Kidney (tissue), 22 donors: ENCODE measurements at regions of chr11 and their contacts with region 1.

Region 1: DNA sequence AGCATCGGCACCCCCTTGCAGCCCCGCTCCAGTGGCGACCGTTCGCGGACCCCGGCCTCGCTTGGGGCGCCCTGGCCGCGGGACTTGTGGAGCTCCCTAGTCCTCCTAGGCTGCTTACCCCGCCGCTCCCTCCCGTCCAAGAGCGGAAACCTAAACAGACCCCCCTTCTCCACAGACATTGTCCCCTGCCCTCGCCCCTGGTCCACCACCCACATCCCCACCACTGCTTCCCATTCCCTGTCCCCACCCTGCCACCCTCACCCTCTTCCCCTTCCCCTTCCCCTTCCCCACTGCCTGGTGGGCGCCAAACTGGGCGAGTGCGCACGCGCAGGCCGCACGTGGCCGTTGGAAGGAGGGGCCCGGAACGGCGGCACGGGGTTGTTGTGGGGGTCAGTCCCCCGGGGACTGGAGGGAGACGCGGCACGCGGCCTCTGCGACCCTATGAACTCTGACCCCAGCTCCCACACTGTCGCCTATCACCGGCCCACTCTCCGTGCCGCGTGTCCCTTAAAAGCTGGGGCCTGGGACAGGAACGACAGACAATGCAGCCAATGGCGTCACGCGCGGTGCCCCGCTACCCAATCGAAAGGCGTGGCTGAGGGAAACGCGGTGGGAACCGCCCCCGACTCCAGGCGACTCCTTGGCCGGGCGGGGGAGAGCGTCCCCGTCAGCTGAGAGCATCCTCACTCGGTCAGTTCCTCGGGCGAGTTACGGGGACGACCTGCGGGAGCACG is at the start of gene SNX32:
- DNase-seq: peak; percentile 95 to 98 (median 97)
- H3K4me3 ChIP-seq: peak within 1 kb of the TSS; percentile 69 to 85 (median 76)
- H3K27ac ChIP-seq: peak within 1 kb of the TSS in 1 of 2 donors; percentile 41
- H3K4me1 ChIP-seq: peaks cover 5 to 13% (median 6%) of the 10 kb centered on the region in 3 donors
- H3K27me3 ChIP-seq: no peaks in the 10 kb centered on the region
- CTCF ChIP-seq: no peak
- total RNA-seq, gene SNX32: 1.0 TPM

Region 2: DNA sequence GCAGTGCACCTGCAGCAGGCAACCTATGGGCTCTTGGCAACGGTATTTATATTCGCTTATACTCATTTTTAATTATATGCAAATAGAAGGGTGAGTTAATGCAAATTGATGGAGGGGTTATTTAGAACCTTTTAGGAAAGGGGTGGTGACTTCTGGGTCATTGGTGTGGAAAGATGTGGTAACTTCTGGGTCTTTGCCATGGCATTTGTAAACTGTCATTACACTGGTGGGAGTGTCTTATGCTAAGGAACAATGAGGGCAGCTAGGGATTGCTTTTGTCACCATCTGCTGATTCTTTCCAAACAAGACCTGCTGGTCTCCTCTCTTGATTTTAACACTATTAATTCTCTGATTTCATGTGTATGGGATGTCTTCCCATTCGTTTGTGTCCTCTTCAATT is 133.1 kb before region 1 on chr11:
- intact Hi-C with region 1: loop called (anchors 10 kb)
- DNase-seq: no peak
- H3K4me3 ChIP-seq: no peak overlapping the region
- H3K27ac ChIP-seq: no peak overlapping the region
- H3K4me1 ChIP-seq: peaks cover 0 to 9% (median 4%) of the 10 kb centered on the region in 3 donors
- H3K27me3 ChIP-seq: no peaks in the 10 kb centered on the region
- CTCF ChIP-seq: no peak

Region 3: DNA sequence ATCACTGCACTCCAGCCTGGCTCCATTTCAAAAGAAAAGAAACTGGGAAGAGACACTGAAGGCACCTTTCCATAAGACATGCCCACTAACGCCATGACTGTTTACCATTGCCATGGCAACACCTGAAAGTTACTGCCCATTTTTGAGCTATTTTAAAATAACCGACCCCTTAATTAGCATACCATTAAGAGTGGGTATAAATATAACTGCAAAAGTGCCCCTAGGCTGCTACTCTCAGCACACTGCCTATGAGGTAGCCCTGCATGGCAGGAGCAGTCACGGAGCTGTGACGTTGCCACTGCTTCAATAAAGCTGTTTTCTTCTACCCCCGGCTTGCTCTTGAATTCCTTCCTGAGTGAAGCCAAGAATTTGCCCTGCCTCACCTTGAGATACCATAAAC is 103.0 kb before region 1 on chr11:
- intact Hi-C with region 1: no loop called
- DNase-seq: peak in 2 of 5 donors; percentile 41
- H3K4me3 ChIP-seq: no peak overlapping the region
- H3K27ac ChIP-seq: peak overlapping the region in 1 of 2 donors; percentile 28
- H3K4me1 ChIP-seq: no peaks in the 10 kb centered on the region
- H3K27me3 ChIP-seq: no peaks in the 10 kb centered on the region
- CTCF ChIP-seq: no peak